ENCODE measurements at regions of chr12 and their contacts with region 1.

Region 1: DNA sequence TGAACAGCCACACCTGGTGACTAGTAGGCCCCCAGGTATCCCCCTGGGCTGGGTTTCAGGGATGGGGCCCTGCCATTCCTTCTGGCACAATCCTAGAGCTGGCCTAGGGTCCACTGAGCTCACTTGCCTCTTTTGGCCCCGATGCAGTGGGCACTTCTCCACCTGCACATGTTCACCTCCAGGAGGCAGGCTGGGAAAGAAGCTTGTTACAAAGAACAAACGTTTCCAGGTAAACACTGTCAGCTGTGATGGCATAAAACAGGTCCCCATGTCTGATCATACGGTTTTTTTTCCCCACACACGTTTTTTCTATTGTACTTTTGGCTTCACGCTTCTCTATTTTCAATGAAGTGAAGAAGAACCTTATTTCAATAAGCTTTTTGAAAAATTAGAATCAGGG is 15.8 kb upstream of the HVCN1 start:
- DNase-seq: no peak
- ATAC-seq: peak; percentile 72
- H3K4me3 ChIP-seq: no peak overlapping the region
- H3K27ac ChIP-seq: no peak overlapping the region
- H3K4me1 ChIP-seq: no peaks in the 10 kb centered on the region
- H3K27me3 ChIP-seq: no peaks in the 10 kb centered on the region
- CTCF ChIP-seq: peak; percentile 41 to 61 (median 60)
- EP300 ChIP-seq: no peak
- POLR2A ChIP-seq: no peak
- RAD21 ChIP-seq: peak; percentile 63

Region 2: GRCh38 chr12:110726708-110727369 is 22.1 kb after region 1 on chr12:
- CTCF ChIA-PET with region 1: interaction called, 7 read pairs
- POLR2A ChIA-PET with region 1: interaction called, 5 read pairs
- RAD21 ChIA-PET with region 1: interaction called, 5 read pairs
- SMC1A ChIA-PET with region 1: interaction called, 13 read pairs
- in situ Hi-C with region 1: no loop called
- intact Hi-C with region 1: no loop called
- DNase-seq: no peak
- ATAC-seq: peak; percentile 55
- H3K4me3 ChIP-seq: no peak overlapping the region; the same call in 1 of the 2 replicates
- H3K27ac ChIP-seq: peak overlapping the region; percentile 38
- H3K4me1 ChIP-seq: peaks cover 16% of the 10 kb centered on the region
- H3K27me3 ChIP-seq: no peaks in the 10 kb centered on the region
- CTCF ChIP-seq: no peak
- EP300 ChIP-seq: no peak
- POLR2A ChIP-seq: no peak
- RAD21 ChIP-seq: no peak

Region 3: DNA sequence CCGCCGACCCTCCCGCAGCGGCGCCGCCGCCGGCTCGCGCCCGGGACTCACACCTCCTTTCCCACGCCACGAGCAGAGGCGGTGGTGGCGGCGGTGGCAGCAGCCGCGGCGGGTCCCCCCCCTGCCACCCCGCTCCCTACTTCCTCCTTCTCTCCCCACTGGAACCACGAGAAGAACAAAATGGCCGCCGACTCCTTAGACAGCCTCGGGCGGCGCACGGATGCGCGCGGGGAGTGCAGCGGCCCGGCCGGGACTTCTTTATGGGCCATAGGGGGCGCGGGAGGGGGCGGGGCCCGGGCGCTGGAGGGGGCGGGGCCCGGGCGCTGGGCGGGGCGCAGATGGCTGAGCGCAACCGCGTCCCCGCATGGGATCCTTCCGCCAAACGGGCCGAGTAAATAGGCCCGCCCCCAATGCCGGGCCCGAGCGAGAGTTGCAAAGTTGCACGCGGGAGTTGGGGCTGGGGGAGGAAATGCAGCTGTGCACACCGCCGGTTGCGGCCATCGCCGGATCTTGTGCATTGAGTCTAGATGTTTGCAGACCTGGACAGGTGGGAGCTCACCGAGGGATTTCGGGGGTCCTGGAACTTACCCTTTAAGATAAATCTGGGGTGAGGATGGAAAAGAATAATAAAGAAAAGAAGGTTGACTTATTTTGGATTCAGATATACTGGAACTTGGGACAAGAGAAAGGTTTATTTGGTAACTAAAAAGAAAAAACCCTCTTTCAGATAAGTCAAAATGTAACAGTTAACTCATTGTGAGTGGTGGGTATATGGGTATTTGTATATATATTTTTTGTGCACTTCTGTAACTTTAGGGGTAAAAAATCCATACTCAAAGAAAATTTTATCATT is 38.2 kb after region 1 on chr12 and contains the start of gene PPP1CC:
- CTCF ChIA-PET with region 1: interaction called, 4 read pairs
- POLR2A ChIA-PET with region 1: interaction called, 5 read pairs
- RAD21 ChIA-PET with region 1: interaction called, 11 read pairs
- SMC1A ChIA-PET with region 1: interaction called, 5 read pairs
- in situ Hi-C with region 1: no loop called
- intact Hi-C with region 1: no loop called
- DNase-seq: peak; percentile 48
- ATAC-seq: peak; percentile 84
- H3K4me3 ChIP-seq: peak within 1 kb of the TSS; percentile 85
- H3K27ac ChIP-seq: peak within 1 kb of the TSS; percentile 63
- H3K4me1 ChIP-seq: peaks cover 6% of the 10 kb centered on the region; the same call in 1 of the 2 replicates
- H3K27me3 ChIP-seq: no peaks in the 10 kb centered on the region
- CTCF ChIP-seq: no peak
- EP300 ChIP-seq: no peak
- POLR2A ChIP-seq: peak; percentile 95
- RAD21 ChIP-seq: no peak
- polyA plus RNA-seq, gene PPP1CC: 64.4 to 111 TPM

Region 4: GRCh38 chr12:110888256-110888991 is 183.7 kb after region 1 on chr12:
- CTCF ChIA-PET with region 1: interaction called, 15 read pairs
- POLR2A ChIA-PET with region 1: interaction called, 3 read pairs
- RAD21 ChIA-PET with region 1: interaction called, 14 read pairs
- SMC1A ChIA-PET with region 1: interaction called, 15 read pairs
- in situ Hi-C with region 1: no loop called
- intact Hi-C with region 1: loop called (anchors 5 kb)
- DNase-seq: no peak
- ATAC-seq: no peak
- H3K4me3 ChIP-seq: no peak overlapping the region
- H3K27ac ChIP-seq: no peak overlapping the region
- H3K4me1 ChIP-seq: no peaks in the 10 kb centered on the region
- H3K27me3 ChIP-seq: no peaks in the 10 kb centered on the region; a peak in 1 of 4 replicates
- CTCF ChIP-seq: no peak
- EP300 ChIP-seq: no peak
- POLR2A ChIP-seq: no peak
- RAD21 ChIP-seq: no peak

Measured in GM12878 (cell line).